Dendritic cell treated with granulocyte-macrophage colony-stimulating factor and Interleukin-4, amounts not matched to agents 40 ng/mL and 50 ng/mL, for 4 days (primary cell): ENCODE measurements at regions of chr20 and their contacts with region 1.

Region 1: DNA sequence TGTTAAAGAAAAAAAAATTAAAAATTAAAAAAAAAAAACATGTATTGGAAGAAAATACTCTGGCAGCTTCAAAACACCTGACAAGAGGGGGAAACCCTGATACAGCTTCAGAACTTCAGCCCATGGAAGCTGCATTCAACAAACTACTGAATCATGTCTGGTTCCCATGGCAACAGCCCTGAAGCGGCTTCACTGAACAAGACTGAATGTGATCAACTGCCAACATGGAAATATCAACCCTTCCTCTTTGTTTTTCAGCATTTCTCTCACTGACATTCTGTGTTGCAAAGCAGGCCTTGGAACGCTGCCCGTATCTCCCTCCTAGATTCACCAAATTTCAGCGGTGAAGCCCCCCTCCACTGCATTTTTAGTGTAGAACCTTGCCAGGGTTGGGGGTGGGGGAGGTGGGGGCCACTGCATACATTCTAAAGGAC is 91.3 kb upstream of the SHLD1 start:
- H3K4me3 Mint-ChIP-seq: no peak overlapping the region
- H3K27ac Mint-ChIP-seq: peak overlapping the region; percentile 88
- H3K4me1 Mint-ChIP-seq: peaks cover 72% of the 10 kb centered on the region
- H3K27me3 Mint-ChIP-seq: no peaks in the 10 kb centered on the region

Region 2: GRCh38 chr20:5630071-5630470 is 28.9 kb before region 1 on chr20:
- intact Hi-C with region 1: no loop called
- H3K4me3 Mint-ChIP-seq: no peak overlapping the region
- H3K27ac Mint-ChIP-seq: no peak overlapping the region
- H3K4me1 Mint-ChIP-seq: peaks cover 1% of the 10 kb centered on the region
- H3K27me3 Mint-ChIP-seq: no peaks in the 10 kb centered on the region

Region 3: GRCh38 chr20:5642155-5642981 is 16.6 kb before region 1 on chr20:
- intact Hi-C with region 1: loop called (anchors 1 kb)
- H3K4me3 Mint-ChIP-seq: no peak overlapping the region
- H3K27ac Mint-ChIP-seq: peak overlapping the region; percentile 98
- H3K4me1 Mint-ChIP-seq: peaks cover 53% of the 10 kb centered on the region
- H3K27me3 Mint-ChIP-seq: no peaks in the 10 kb centered on the region

Region 4: DNA sequence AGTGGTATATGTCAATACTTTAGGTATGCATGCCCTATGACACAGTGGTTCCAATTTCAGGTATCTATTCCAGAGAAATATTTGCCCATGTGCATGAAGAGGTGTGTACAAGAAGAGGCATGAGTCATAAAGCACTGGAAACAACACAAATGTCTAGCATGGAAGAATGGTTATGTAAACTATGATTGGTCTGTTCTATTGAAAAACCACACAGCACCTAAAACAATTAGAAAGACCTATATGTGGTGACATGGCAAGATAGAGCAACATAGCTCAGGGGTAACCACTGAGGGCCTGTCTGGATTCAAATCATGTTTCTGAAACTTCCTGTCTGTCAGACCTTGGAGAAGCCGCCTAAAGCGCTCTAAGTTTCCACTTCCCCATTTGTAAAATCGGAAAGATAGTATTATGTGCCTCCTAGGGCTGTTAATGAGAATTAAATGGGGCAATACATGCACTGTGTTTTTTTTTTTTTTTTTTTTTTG is 15.3 kb after region 1 on chr20:
- intact Hi-C with region 1: loop called (anchors 2 kb)
- H3K4me3 Mint-ChIP-seq: no peak overlapping the region
- H3K27ac Mint-ChIP-seq: peak overlapping the region; percentile 70
- H3K4me1 Mint-ChIP-seq: peaks cover 35% of the 10 kb centered on the region
- H3K27me3 Mint-ChIP-seq: no peaks in the 10 kb centered on the region